Activated B cell treated with CpG ODN at 0.5 μM for 24 hours (primary cell): ENCODE measurements at regions of chr19 and their contacts with region 1.

Region 1: GRCh38 chr19:48398375-48399235 is 5.1 kb downstream of the GRIN2D start:
- DNase-seq: peak; percentile 80
- ATAC-seq: peak; percentile 72
- H3K4me3 Mint-ChIP-seq: peak overlapping the region; percentile 66
- H3K27ac Mint-ChIP-seq: no peak overlapping the region
- H3K4me1 Mint-ChIP-seq: peaks cover 46% of the 10 kb centered on the region
- H3K27me3 Mint-ChIP-seq: peaks cover 26% of the 10 kb centered on the region
- CTCF ChIP-seq: no peak

Region 2: GRCh38 chr19:48419158-48419920 is 20.7 kb after region 1 on chr19:
- CTCF ChIA-PET with region 1: no interaction called
- POLR2A ChIA-PET with region 1: interaction called, 3 read pairs
- intact Hi-C with region 1: loop called (anchors 2 kb)
- DNase-seq: peak; percentile 61
- ATAC-seq: peak; percentile 87
- H3K4me3 Mint-ChIP-seq: peak overlapping the region; percentile 84
- H3K27ac Mint-ChIP-seq: peak overlapping the region; percentile 56
- H3K4me1 Mint-ChIP-seq: peaks cover 18% of the 10 kb centered on the region
- H3K27me3 Mint-ChIP-seq: peaks cover 26% of the 10 kb centered on the region
- CTCF ChIP-seq: no peak